Posterior vena cava (tissue), 2 donors: ENCODE measurements at regions of chr17 and their contacts with region 1.

Region 1: DNA sequence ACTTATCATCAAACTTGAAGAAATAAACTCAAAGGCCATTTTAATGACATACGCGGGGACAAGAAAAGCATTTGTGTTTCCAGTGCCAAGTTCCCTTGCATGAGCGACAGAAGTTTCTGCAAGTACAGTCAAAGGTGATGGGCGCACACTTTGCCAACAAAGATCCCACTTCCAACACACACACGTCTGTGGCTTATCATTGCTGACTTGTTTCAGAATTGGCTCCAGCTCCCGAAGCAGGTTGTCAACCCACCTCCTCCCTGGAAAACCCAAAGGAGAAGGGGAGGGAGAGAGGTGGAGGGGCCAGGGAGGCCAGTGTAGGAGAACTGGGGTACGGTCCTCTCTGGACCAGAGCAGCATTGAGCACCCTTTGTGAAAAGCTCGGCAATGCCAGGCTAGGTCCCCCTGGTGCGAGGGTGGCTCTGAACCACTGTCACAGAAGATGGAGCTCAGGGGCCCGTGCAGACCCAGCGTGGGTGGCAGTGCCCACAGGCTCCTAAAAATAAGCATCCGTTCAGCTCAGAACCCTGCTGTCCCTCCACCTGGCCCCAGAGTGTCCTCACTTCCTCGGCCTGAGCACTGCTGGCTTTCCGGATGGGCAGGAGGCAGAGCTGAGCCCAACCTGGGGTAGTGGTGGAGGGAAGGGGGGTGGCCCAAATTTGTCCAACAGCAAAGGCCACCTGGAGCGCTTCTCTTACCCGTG is 33.2 kb downstream of the RBFOX3 start:
- DNase-seq: peak; percentile 2

Region 2: DNA sequence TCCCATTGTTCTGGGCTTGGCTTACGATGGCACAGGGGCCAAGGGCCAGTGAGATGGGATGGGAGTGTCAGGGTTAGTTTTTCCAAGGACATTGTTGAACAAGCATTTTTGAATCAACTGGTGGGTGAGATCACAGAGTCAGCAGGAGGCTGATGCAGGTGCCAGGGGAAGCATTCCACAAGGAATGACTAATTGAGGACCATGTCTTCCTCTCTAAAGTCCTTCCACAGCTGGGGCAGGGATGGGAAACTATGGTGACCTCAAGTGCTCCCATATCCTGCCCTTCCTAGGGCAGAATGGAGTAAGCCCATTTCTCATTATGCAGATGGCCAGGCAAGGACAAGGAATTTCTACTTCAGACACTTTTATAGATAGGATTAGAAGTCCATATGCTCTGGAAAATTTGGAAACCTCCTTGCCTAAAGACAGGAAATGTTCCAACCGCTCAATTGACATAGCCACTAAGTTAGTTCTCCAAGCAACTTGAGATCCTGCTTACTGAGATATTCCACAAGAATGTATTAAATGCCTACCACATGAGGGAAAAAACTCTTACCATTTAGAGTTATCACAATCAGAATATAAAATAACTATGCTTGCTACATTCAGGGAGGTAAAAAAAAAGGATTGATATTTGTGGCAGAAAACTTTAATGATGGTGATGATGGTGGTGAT is 524.2 kb before region 1 on chr17:
- intact Hi-C with region 1: loop called in 1 of 2 experiments (anchors 5 kb)
- DNase-seq: peak; percentile 45